ENCODE measurements at regions of chr11 and their contacts with region 1.

Region 1: GRCh38 chr11:74248469-74248868 is 63.0 kb downstream of the P4HA3 start:
- DNase-seq: no peak
- H3K4me3 ChIP-seq: no peak overlapping the region
- H3K27ac ChIP-seq: no peak overlapping the region
- H3K4me1 ChIP-seq: no peaks in the 10 kb centered on the region
- H3K27me3 ChIP-seq: no peaks in the 10 kb centered on the region

Region 2: DNA sequence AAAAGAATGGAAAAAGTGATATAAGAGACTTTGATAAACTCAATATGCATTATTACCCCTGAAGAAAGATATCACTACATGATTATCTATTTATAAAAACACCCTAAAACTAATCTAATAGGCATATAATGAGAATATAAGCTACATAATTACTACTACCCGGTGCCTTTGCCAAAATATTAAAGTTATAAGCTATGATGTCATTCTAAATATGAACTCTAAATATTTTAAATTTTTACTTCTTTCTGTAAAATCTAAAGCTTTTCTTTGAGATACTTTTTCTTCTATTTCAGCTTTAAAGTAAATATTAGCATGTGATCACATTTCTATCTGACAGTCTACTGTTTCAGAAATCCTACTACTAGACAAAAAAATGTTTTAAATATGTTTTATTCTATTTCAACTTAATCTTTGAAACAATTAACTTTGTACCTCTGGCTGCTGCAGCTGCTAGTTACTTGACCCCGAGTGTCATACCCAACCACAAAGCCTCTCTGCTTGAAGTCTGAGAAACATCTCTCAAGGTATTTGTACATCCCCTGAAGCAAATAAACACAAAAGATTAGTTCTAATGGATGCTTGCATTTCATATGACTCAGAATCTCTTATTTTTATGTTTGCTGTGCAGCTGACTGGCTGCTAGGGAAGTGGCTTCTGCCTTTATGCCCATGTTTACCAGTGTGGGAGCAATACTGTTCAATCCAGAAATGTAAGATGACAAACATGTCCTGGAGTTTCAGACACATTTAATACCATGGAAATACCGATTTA is 123.0 kb after region 1 on chr11:
- in situ Hi-C with region 1: no loop called
- DNase-seq: peak; percentile 48
- H3K4me3 ChIP-seq: no peak overlapping the region
- H3K27ac ChIP-seq: peak overlapping the region; percentile 32
- H3K4me1 ChIP-seq: peaks cover 29% of the 10 kb centered on the region
- H3K27me3 ChIP-seq: no peaks in the 10 kb centered on the region

Region 3: DNA sequence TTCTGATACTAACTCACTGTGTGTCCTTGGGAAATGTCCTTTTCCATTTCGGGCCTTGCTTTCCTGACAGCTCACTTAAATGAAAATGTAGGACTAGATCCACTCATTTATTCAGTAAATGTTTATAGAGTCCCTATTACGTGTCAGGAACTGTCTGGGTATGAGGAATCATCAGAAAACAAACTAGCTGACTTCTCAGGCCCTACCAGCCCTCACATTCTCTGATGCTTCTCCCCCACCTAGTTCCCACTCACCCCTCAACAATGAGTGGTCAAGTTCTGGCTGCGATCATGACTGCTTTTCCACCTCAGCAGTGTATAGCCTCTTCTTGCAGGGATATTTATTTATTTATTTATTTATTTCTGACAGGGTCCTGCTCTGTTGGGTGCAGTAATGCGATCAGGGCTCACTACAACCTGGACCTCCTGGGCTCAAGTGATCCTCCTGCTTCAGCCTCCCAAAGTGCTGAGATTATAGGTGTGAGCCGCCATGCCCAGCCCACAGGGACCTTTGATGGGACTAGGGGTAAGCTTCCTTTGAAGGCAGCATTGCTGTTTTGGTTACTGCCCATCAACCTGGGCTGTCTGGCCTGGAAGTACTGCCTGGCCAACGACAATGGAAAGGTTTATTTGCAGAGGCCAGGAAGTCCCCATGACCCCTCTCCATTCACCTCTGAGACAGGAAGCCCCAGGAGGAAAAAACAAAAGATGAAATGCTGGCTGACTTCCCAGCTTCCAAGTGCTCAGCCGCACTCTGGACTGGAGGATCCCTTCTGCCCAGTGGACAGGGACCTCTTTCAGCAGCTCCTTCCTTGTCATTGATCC is 310.9 kb after region 1 on chr11:
- in situ Hi-C with region 1: loop called (anchors 10 kb)
- DNase-seq: no peak
- H3K4me3 ChIP-seq: no peak overlapping the region
- H3K27ac ChIP-seq: no peak overlapping the region
- H3K4me1 ChIP-seq: peaks cover 9% of the 10 kb centered on the region; the same call in 1 of the 2 replicates
- H3K27me3 ChIP-seq: no peaks in the 10 kb centered on the region